MCF 10A (cell line): ENCODE measurements at regions of chr21 and their contacts with region 1.

Region 1: DNA sequence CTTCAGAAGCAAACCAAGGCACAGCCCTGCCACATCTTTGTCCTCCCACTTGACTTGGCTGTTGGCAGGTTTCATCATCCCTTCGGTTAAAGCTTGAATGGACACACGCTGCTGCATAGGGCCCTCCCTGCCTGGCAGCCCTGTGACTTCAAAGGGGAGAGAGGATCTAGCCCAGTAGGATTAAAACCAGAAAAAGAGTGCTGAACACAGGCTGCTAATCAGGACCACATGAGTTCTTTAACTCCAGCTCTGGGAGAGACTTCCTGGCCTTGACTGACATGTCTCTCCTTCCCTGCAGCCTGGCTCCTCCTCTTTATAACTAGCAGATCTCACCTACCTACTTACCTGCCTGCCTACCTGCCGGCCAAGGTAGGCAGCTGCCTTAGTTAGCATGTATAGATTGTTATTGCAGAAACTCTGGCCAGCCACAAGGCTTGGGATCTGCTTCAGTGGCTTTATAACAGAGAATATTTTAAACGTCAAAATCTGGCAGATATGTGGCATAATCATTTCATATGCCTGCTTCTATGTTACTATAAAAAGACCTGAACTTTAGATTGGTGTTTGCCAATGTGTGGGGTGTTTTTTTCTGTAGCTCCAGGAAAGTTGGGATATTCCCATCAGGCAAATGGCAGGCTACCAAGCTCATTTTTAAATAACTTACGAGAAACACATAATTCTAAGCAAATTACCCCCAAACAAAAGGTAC is 49.4 kb downstream of the ERG start:
- DNase-seq: no peak
- H3K4me3 Mint-ChIP-seq: no peak overlapping the region
- H3K27ac Mint-ChIP-seq: peak overlapping the region; percentile 13
- H3K4me1 Mint-ChIP-seq: no peaks in the 10 kb centered on the region
- H3K27me3 Mint-ChIP-seq: no peaks in the 10 kb centered on the region
- CTCF ChIP-seq: no peak

Region 2: DNA sequence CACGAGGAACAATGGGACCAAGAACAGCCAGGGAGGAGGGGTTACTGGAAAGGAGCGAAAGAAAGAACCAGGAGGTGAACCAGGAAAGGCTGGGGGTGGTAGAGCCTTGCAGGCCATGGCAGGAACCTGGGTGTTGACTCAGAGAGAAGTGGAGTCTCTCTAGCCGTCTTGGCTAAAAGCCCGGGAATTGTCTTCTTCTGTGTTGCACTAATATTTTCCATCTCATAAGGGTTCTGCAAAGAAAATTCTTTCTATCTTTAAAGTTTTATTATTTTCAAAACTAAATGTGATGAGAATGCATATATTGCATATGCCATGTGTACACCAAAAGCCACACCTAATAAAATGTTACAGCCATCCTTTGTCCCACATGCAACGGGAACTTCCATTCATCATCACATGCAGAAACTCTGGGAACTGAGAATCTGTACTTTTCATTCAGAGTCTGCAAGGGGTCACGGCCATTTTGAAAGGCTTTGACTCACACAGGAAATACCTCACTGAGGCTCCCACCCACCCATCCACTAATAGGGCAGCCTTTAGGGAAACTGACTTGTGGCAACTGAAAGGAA is 11.4 kb after region 1 on chr21:
- CTCF ChIA-PET with region 1: interaction called, 3 read pairs
- POLR2A ChIA-PET with region 1: interaction called, 11 read pairs
- intact Hi-C with region 1: no loop called
- DNase-seq: peak; percentile 98
- H3K4me3 Mint-ChIP-seq: peak overlapping the region; percentile 41
- H3K27ac Mint-ChIP-seq: peak overlapping the region; percentile 25
- H3K4me1 Mint-ChIP-seq: peaks cover 28% of the 10 kb centered on the region
- H3K27me3 Mint-ChIP-seq: no peaks in the 10 kb centered on the region
- CTCF ChIP-seq: no peak

Region 3: DNA sequence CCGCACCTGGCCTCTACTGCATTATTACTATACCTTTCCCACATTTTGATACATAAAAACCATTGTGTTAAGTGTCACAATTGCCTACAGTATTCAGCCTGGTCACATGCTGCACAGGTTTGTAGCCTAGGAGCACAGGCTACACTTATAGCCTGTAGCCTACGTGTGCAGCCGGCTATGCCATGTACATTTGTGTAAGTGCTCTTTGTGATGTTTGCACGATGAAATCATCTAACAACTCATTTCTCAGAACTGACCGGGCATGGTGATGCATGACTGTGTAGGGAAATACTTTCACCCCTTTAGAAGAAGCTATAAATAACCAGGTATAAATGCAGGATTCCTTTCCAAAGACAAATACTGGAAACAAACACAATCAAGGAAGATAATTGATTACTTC is 37.4 kb after region 1 on chr21:
- CTCF ChIA-PET with region 1: no interaction called
- POLR2A ChIA-PET with region 1: no interaction called
- intact Hi-C with region 1: no loop called
- DNase-seq: peak; percentile 65
- H3K4me3 Mint-ChIP-seq: no peak overlapping the region
- H3K27ac Mint-ChIP-seq: peak overlapping the region; percentile 89
- H3K4me1 Mint-ChIP-seq: peaks cover 27% of the 10 kb centered on the region
- H3K27me3 Mint-ChIP-seq: no peaks in the 10 kb centered on the region
- CTCF ChIP-seq: no peak